HepG2 (cell line): ENCODE measurements at regions of chr1 and their contacts with region 1.

Region 1: GRCh38 chr1:155277070-155277895 is at the start of gene HCN3:
- DNase-seq: peak; percentile 93
- ATAC-seq: peak; percentile 79
- H3K4me3 ChIP-seq: peak within 1 kb of the TSS; percentile 87 to 97 (median 95)
- H3K27ac ChIP-seq: peak within 1 kb of the TSS; percentile 38
- H3K4me1 ChIP-seq: peaks cover 44% of the 10 kb centered on the region
- H3K27me3 ChIP-seq: no peaks in the 10 kb centered on the region; a peak in 2 of 5 replicates
- CTCF ChIP-seq: peak; percentile 82
- EP300 ChIP-seq: no peak
- POLR2A ChIP-seq: no peak
- RAD21 ChIP-seq: peak; percentile 91
- total RNA-seq, gene HCN3: 1.3 and 2.4 TPM in 2 replicates

Region 2: GRCh38 chr1:155172732-155173477 is 104.4 kb before region 1 on chr1 and contains the start of gene KRTCAP2:
- CTCF ChIA-PET with region 1: no interaction called
- POLR2A ChIA-PET with region 1: no interaction called
- in situ Hi-C with region 1: no loop called
- intact Hi-C with region 1: no loop called
- DNase-seq: peak; percentile 93
- ATAC-seq: peak; percentile 78
- H3K4me3 ChIP-seq: peak within 1 kb of the TSS; percentile 71 to 92 (median 79)
- H3K27ac ChIP-seq: peak within 1 kb of the TSS; percentile 73
- H3K4me1 ChIP-seq: peaks cover 43% of the 10 kb centered on the region
- H3K27me3 ChIP-seq: 0 out of 5 replicates have a peak, but pooled peaks cover 0 to 1% of the 10 kb centered on the region in 2 experiments
- CTCF ChIP-seq: peak; percentile 98
- EP300 ChIP-seq: peak in 1 of 2 experiments; percentile 37; a peak in 1 of 4 replicates
- POLR2A ChIP-seq: peak; percentile 71 to 77
- RAD21 ChIP-seq: peak; percentile 37; the same call in 1 of the 2 replicates
- total RNA-seq, gene KRTCAP2: 48.5 and 79.4 TPM in 2 replicates

Region 3: GRCh38 chr1:155227261-155228095 is 49.8 kb before region 1 on chr1:
- CTCF ChIA-PET with region 1: no interaction called
- POLR2A ChIA-PET with region 1: interaction called, 10 read pairs
- in situ Hi-C with region 1: no loop called
- intact Hi-C with region 1: no loop called
- DNase-seq: peak; percentile 98
- ATAC-seq: peak; percentile 98
- H3K4me3 ChIP-seq: peak overlapping the region; percentile 67 to 69 (median 69)
- H3K27ac ChIP-seq: peak overlapping the region; percentile 66
- H3K4me1 ChIP-seq: peaks cover 32% of the 10 kb centered on the region
- H3K27me3 ChIP-seq: no peaks in the 10 kb centered on the region
- CTCF ChIP-seq: no peak
- EP300 ChIP-seq: peak in 1 of 2 experiments; percentile 6; a peak in 1 of 4 replicates
- POLR2A ChIP-seq: peak; percentile 70 to 81
- RAD21 ChIP-seq: no peak

Region 4: GRCh38 chr1:155261852-155262673 is 15.2 kb before region 1 on chr1 and contains the start of gene SCAMP3:
- CTCF ChIA-PET with region 1: no interaction called
- POLR2A ChIA-PET with region 1: interaction called, 69 read pairs
- in situ Hi-C with region 1: no loop called
- intact Hi-C with region 1: no loop called
- DNase-seq: peak; percentile 97
- ATAC-seq: peak; percentile 95
- H3K4me3 ChIP-seq: peak within 1 kb of the TSS; percentile 84 to 90 (median 84)
- H3K27ac ChIP-seq: peak within 1 kb of the TSS; percentile 73
- H3K4me1 ChIP-seq: peaks cover 15% of the 10 kb centered on the region
- H3K27me3 ChIP-seq: no peaks in the 10 kb centered on the region; a peak in 1 of 5 replicates
- CTCF ChIP-seq: peak; percentile 25; the same call in 1 of the 2 replicates
- EP300 ChIP-seq: no peak; a peak in 1 of 4 replicates
- POLR2A ChIP-seq: peak; percentile 83 to 91
- RAD21 ChIP-seq: peak; percentile 8; the same call in 1 of the 2 replicates
- total RNA-seq, gene SCAMP3: 27.0 and 46.8 TPM in 2 replicates

Region 5: GRCh38 chr1:155300553-155301329 is 23.5 kb after region 1 on chr1:
- CTCF ChIA-PET with region 1: no interaction called
- POLR2A ChIA-PET with region 1: interaction called, 51 read pairs
- in situ Hi-C with region 1: no loop called
- intact Hi-C with region 1: no loop called
- DNase-seq: peak; percentile 77
- ATAC-seq: peak; percentile 94
- H3K4me3 ChIP-seq: peak overlapping the region; percentile 28 to 69 (median 44); a peak in 5 of 6 replicates
- H3K27ac ChIP-seq: peak overlapping the region; percentile 95
- H3K4me1 ChIP-seq: peaks cover 74% of the 10 kb centered on the region
- H3K27me3 ChIP-seq: no peaks in the 10 kb centered on the region; a peak in 1 of 5 replicates
- CTCF ChIP-seq: peak; percentile 32
- EP300 ChIP-seq: peak in 1 of 2 experiments; percentile 70; a peak in 2 of 4 replicates
- POLR2A ChIP-seq: peak; percentile 49 to 93; a peak in 3 of 4 replicates
- RAD21 ChIP-seq: peak; percentile 49

Region 6: DNA sequence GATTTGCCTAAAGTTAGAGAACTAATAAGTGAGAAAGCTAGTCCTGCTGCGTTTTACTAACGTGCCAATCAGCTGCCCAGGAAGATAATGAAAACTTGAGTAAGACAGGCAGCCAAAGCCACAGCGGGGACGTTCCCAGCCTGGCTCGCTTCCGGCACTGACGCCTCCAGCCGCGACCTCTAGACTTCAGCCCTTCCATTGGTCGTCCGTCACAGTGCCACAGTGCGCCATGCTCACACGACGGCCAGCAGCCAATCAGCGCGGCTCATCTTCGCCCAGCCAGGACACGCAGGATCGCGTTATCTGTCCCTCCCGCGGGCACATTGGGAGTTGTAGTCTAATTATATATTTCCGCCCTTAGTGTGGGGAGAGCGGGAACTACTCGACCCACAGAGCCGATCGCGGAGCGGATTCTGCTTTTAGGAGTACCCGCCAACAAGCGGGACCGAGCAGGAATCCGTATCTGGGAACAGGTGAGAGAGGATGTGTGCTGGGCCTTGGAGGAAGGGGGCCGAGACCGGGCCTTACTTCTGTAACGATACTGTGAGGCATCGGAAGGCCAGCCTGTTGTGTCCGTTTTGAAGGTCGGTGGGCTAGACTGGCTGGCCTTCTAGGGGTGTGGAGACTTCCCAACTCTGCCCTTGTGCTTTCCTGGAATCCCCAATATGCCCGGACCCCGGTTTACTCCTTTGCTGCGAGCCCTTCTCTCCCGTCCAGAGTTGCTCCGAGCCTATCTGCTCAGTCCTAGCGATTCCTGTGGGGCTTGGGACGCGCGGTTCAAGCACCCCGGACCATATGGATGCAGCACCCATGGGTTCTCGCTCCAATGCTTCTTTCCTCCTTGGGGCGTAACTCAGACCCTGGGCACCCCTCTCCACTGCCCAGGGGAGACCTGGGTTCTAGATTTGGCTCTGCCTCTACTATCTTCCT is 31.5 kb after region 1 on chr1 and contains the start of gene FDPS:
- CTCF ChIA-PET with region 1: interaction called, 35 read pairs
- POLR2A ChIA-PET with region 1: interaction called, 51 read pairs
- in situ Hi-C with region 1: no loop called
- intact Hi-C with region 1: loop called (anchors 1 kb)
- DNase-seq: peak; percentile 97
- ATAC-seq: peak; percentile 92
- H3K4me3 ChIP-seq: peak within 1 kb of the TSS; percentile 92 to 95 (median 94)
- H3K27ac ChIP-seq: peak within 1 kb of the TSS; percentile 83
- H3K4me1 ChIP-seq: peaks cover 84% of the 10 kb centered on the region
- H3K27me3 ChIP-seq: no peaks in the 10 kb centered on the region; a peak in 1 of 5 replicates
- CTCF ChIP-seq: no peak; the same call in 1 of the 2 replicates
- EP300 ChIP-seq: peak in 1 of 2 experiments; percentile 57; a peak in 2 of 4 replicates
- POLR2A ChIP-seq: peak; percentile 71 to 84
- RAD21 ChIP-seq: 0 out of 2 replicates have a peak, but pooled peaks have one; percentile 22
- total RNA-seq, gene FDPS: 519 and 610 TPM in 2 replicates

Region 7: GRCh38 chr1:155323798-155324610 is 46.7 kb after region 1 on chr1:
- CTCF ChIA-PET with region 1: interaction called, 21 read pairs
- POLR2A ChIA-PET with region 1: interaction called, 38 read pairs
- in situ Hi-C with region 1: loop called (anchors 5 kb)
- intact Hi-C with region 1: loop called (anchors 5 kb)
- DNase-seq: peak; percentile 93
- ATAC-seq: peak; percentile 84
- H3K4me3 ChIP-seq: peak overlapping the region; percentile 80 to 94 (median 81)
- H3K27ac ChIP-seq: peak overlapping the region; percentile 71
- H3K4me1 ChIP-seq: peaks cover 36% of the 10 kb centered on the region
- H3K27me3 ChIP-seq: no peaks in the 10 kb centered on the region; a peak in 1 of 5 replicates
- CTCF ChIP-seq: no peak
- EP300 ChIP-seq: no peak
- POLR2A ChIP-seq: peak in 1 of 2 experiments; percentile 61; a peak in 2 of 4 replicates
- RAD21 ChIP-seq: no peak

Region 8: DNA sequence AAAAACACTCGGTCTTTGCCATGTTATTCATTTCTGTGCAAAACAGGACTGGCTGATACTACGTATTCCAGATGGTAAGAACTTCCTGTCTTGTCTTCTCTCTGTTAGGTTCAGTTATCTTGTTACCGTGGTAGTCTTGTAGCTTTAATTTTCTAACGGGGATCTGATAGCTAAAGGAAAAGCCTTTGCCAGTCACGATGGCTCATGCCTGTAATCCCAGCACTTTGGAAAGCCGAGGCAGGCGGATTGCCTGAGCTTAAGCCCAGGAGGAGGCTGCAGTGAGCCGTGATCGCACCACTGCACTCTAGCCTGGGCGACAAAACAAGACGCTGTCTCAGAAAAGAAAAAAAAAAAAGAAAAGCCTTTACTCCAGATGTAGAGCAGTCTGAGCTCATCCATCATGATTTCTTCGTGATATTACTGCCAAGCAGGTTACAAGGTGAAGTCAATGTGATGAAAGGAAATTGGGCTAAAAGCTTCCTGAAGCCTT is 321.6 kb after region 1 on chr1:
- CTCF ChIA-PET with region 1: no interaction called
- POLR2A ChIA-PET with region 1: no interaction called
- in situ Hi-C with region 1: no loop called
- intact Hi-C with region 1: no loop called
- DNase-seq: no peak
- ATAC-seq: peak; percentile 90
- H3K4me3 ChIP-seq: peak overlapping the region; percentile 40 to 57 (median 47)
- H3K27ac ChIP-seq: no peak overlapping the region
- H3K4me1 ChIP-seq: peaks cover 16% of the 10 kb centered on the region
- H3K27me3 ChIP-seq: no peaks in the 10 kb centered on the region
- CTCF ChIP-seq: peak; percentile 44
- EP300 ChIP-seq: no peak
- POLR2A ChIP-seq: no peak
- RAD21 ChIP-seq: no peak